KBM-7 (cell line): ENCODE measurements at regions of chr12 and their contacts with region 1.

Region 1: GRCh38 chr12:2583091-2583497 is 211.7 kb upstream of the FKBP4 start:
- DNase-seq: peak; percentile 74

Region 2: DNA sequence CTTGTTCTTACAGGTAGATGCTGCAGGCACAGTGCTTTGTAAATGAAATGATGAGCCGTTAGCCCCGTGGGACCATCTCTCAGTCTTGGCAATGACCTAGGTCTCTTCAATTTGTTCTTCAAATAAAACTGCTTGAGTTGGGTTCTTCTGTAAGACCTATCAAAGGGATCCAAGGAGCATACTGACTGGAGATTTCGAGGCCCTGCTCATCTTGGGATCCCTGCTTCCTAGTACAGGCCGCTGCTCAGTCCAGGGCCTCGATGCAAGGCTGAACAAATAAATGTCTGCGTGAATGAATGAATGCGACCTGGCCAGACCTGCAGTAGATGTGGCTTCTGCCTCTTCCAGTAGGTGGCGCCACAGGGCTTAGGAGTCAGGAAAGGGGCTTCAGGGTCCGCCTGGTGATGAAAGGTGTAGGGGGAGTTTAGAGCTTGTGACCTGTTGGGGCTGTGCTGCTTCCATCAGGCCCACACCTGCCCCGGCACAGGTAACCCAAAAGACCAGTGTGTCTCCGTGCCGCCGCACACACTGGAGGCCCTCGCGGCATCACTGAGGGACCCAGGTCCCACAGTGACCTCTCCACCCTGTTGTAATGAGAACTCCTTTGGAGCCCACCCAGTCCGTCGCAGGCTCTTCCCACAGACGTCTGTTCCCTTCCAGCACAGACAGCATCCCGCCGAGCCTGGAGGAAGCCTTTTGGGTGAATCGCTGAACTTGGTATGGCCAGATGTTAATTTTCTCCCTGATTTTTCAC is 525.9 kb before region 1 on chr12:
- in situ Hi-C with region 1: loop called (anchors 25 kb)
- DNase-seq: peak; percentile 84